Posterior cingulate gyrus (tissue), 11 donors: ENCODE measurements at regions of chr12 and their contacts with region 1.

Region 1: DNA sequence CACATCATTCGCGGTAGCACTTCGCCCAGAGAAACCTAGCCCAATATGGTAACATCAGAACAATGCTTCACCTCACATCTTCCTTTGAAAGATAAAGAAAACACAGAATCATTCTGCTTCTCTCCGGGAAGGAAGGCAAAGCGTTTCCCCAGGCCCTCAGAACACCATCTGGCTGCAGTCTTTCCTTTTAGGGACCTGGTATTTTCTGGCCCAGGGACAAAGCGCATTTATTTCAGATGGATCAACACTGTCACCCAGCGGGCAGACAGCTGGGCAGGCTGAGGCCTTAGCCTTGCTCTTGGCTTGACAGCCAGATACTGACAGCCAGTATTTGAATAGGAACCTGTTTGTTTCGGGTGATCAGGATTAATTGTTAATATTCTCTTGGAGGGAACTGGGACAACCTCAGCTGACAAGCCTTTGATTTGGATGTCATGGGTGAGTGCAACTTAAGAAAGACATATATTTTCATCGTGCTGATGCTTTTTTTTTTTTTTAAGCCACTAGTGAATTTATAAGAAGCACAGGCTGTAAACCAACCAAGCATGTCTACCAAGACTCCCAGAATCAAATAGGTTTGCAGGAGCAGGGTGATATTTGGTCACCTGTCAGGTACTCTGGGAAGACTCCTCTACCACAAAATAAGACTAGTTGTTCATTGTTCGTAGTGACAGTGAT is 118.9 kb downstream of the VEZT start:
- DNase-seq: peak; percentile 51 to 93 (median 66)

Region 2: DNA sequence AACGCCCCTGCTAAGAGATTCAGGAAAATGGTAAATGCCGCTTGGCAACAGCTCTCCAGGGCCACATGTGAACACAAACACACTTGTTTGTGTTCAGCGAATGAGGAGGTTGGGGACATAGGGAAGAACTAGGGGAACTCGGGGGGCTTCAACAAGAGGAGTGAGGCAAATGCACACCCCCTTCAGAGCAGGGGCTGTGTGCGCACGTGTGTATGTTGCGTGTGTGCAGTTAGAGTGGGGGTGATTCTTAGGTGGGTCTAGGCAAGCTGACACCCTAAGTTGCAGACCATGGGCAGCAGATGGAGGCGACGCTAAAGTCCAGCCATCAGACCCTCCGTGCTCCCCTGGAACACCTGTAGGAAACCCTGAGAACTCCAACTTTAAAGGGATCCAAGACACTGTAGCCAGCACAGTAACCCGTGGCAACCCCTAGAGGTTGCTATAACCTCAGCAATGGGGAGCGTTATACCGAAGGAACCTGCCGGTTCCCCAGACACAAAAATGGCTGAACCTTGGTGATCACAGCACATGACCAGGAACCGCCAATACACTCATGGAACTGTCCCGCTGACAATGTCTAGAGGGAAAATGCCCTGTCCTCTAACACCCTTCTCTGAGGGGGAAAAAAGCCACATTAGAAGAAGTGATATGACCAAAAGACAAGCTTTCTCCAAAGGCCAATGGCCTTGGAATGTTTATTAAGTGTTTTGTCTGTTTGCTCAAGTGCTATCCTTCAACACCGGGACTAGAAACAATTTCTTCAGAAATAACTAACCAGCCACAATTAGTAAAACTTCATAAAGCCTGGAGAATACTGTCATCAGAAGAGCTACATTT is 790.4 kb before region 1 on chr12:
- intact Hi-C with region 1: loop called (anchors 10 kb)
- DNase-seq: peak in 5 of 10 donors; percentile 23 to 88 (median 50)

Region 3: GRCh38 chr12:95117178-95117599 is 219.3 kb before region 1 on chr12:
- intact Hi-C with region 1: loop called (anchors 1 kb)
- DNase-seq: peak in 5 of 10 donors; percentile 26 to 52 (median 32)

Region 4: DNA sequence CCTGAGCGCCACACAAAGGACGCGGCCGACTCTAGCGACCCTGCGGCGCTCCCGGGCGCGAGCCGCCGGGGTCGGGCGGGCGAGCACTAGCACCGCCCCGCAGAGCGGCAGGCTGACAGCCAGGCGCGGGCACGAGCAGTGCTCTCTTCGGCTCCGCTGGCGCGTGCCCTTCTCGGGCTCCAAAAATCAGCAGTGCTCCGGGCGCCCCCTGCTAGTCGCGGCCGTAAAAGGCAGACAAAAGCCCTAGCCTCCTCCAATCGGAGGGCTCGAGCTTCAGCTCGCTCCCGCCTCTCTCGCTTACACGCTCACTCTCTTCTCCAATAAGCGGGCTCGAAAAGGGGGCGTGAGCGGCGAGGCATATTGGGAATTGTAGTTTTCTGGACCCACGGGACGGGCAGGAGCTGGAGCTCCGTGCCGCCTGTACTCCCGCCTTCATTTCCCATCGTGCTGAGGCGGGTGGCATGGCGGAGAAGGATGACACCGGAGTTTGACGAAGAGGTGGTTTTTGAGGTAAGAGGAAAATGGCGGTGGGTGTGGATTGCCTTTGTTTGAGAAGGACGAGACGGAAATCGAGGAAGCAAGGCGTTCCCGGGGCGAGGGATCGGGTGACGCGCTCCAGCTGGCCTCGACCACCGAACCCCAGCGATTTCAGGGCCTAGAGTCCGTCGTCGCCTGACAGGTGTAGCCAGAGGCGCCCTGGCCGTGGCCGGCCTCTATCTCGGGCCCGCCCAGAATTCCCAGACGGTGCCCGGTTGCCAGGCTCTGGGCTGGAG is 119.0 kb before region 1 on chr12 and contains the starts of genes FGD6 and VEZT:
- intact Hi-C with region 1: loop called (anchors 5 kb)
- DNase-seq: peak; percentile 97 to 100 (median 98)

Region 5: DNA sequence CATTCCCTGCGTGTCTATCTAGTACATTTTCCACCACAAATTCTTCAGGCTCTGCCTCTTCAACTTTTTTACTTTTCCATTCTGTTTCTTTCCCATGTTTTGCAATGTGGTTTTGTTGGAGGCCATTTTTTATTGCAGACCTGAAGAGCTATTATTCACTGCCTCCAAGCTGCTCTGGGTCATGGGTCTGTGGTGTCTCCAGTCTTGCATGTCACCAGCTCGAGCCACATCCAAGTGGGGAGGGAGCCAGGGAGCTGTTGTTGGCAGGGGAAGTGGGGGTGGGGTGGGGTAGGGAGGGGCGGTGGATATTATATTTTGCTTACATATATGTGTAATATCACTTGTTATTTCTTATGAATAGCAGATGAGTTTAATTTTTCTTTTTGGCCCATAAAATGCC is 49.8 kb before region 1 on chr12:
- intact Hi-C with region 1: no loop called
- DNase-seq: no peak

Region 6: GRCh38 chr12:95532851-95533250 is 196.3 kb after region 1 on chr12:
- intact Hi-C with region 1: loop called (anchors 1 kb)
- DNase-seq: no peak